HCT116 (cell line): ENCODE measurements at regions of chr17 and their contacts with region 1.

Region 1: GRCh38 chr17:11997147-11997846 is at the start of gene ZNF18:
- DNase-seq: peak; percentile 76
- ATAC-seq: peak; percentile 97
- H3K4me3 ChIP-seq: peak within 1 kb of the TSS; percentile 86 to 91
- H3K27ac ChIP-seq: peak within 1 kb of the TSS; percentile 85
- H3K4me1 ChIP-seq: peaks cover 0 to 6% of the 10 kb centered on the region in 2 experiments; a peak in 2 of 4 replicates
- H3K27me3 ChIP-seq: no peaks in the 10 kb centered on the region
- CTCF ChIP-seq: no peak
- POLR2A ChIP-seq: peak; percentile 86
- RAD21 ChIP-seq: no peak
- total RNA-seq, gene ZNF18: 6.2 TPM

Region 2: DNA sequence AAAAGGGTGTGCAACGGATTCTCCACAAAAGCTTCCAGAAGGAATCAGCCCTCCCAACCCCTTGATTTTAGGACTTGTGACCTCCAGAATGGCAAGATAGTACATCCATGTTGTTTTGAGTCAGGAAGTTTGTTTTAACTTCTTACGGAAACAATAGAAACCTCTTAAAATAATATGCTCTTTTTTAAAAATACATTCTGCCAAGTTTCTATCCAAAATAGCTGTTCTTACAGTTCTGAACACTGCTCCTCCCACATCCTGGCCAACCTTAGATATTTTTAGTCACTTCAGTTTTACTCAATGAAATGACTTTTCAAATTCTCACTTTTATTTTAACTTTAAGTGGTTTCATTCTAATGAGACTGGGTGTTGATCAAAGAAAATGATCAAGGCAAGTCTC is 156.5 kb before region 1 on chr17:
- CTCF ChIA-PET with region 1: no interaction called
- POLR2A ChIA-PET with region 1: no interaction called
- RAD21 ChIA-PET with region 1: no interaction called
- intact Hi-C with region 1: no loop called
- DNase-seq: no peak
- ATAC-seq: no peak
- H3K4me3 ChIP-seq: no peak overlapping the region
- H3K27ac ChIP-seq: no peak overlapping the region
- H3K4me1 ChIP-seq: no peaks in the 10 kb centered on the region
- H3K27me3 ChIP-seq: peaks cover 44% of the 10 kb centered on the region
- CTCF ChIP-seq: no peak
- POLR2A ChIP-seq: no peak
- RAD21 ChIP-seq: no peak

Region 3: DNA sequence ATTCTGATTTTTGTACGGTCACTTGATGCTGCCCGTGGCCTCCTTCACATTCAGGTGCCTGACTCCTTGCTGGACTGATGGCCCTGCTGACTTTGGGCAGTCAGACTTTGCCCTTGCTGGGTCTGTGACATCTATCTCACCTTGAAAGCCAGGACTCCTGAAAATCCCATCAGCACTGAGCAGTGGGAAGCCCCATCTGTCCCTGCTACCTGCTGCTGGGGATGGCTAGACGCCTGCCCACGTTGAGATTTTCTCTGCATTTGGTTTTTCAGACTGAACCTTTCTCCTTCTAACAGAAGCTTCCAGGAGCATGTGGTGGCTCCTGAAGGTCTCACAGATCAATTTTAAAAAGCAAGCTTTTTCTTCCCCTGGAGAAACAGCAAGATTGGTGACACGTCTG is 10.2 kb after region 1 on chr17:
- CTCF ChIA-PET with region 1: no interaction called
- POLR2A ChIA-PET with region 1: interaction called, 10 read pairs
- RAD21 ChIA-PET with region 1: no interaction called
- intact Hi-C with region 1: no loop called
- DNase-seq: no peak
- ATAC-seq: no peak
- H3K4me3 ChIP-seq: no peak overlapping the region
- H3K27ac ChIP-seq: no peak overlapping the region
- H3K4me1 ChIP-seq: no peaks in the 10 kb centered on the region
- H3K27me3 ChIP-seq: no peaks in the 10 kb centered on the region
- CTCF ChIP-seq: no peak
- POLR2A ChIP-seq: no peak
- RAD21 ChIP-seq: no peak

Region 4: GRCh38 chr17:12020642-12021622 is 23.6 kb after region 1 on chr17 and contains the start of gene MAP2K4:
- CTCF ChIA-PET with region 1: no interaction called
- POLR2A ChIA-PET with region 1: interaction called, 19 read pairs
- RAD21 ChIA-PET with region 1: no interaction called
- intact Hi-C with region 1: loop called (anchors 2 kb)
- DNase-seq: peak; percentile 61
- ATAC-seq: peak; percentile 92
- H3K4me3 ChIP-seq: peak within 1 kb of the TSS; percentile 65 to 76
- H3K27ac ChIP-seq: peak within 1 kb of the TSS; percentile 84
- H3K4me1 ChIP-seq: peaks cover 33 to 46% of the 10 kb centered on the region in 2 experiments
- H3K27me3 ChIP-seq: no peaks in the 10 kb centered on the region
- CTCF ChIP-seq: no peak
- POLR2A ChIP-seq: peak; percentile 90
- RAD21 ChIP-seq: no peak
- total RNA-seq, gene MAP2K4: 42.3 TPM

Region 5: GRCh38 chr17:12301551-12301950 is 304.3 kb after region 1 on chr17:
- CTCF ChIA-PET with region 1: no interaction called
- POLR2A ChIA-PET with region 1: no interaction called
- RAD21 ChIA-PET with region 1: no interaction called
- intact Hi-C with region 1: no loop called
- DNase-seq: no peak
- ATAC-seq: no peak
- H3K4me3 ChIP-seq: no peak overlapping the region
- H3K27ac ChIP-seq: no peak overlapping the region
- H3K4me1 ChIP-seq: no peaks in the 10 kb centered on the region
- H3K27me3 ChIP-seq: no peaks in the 10 kb centered on the region
- CTCF ChIP-seq: no peak
- POLR2A ChIP-seq: no peak
- RAD21 ChIP-seq: no peak